ENCODE measurements at regions of chr7 and their contacts with region 1.

Region 1: DNA sequence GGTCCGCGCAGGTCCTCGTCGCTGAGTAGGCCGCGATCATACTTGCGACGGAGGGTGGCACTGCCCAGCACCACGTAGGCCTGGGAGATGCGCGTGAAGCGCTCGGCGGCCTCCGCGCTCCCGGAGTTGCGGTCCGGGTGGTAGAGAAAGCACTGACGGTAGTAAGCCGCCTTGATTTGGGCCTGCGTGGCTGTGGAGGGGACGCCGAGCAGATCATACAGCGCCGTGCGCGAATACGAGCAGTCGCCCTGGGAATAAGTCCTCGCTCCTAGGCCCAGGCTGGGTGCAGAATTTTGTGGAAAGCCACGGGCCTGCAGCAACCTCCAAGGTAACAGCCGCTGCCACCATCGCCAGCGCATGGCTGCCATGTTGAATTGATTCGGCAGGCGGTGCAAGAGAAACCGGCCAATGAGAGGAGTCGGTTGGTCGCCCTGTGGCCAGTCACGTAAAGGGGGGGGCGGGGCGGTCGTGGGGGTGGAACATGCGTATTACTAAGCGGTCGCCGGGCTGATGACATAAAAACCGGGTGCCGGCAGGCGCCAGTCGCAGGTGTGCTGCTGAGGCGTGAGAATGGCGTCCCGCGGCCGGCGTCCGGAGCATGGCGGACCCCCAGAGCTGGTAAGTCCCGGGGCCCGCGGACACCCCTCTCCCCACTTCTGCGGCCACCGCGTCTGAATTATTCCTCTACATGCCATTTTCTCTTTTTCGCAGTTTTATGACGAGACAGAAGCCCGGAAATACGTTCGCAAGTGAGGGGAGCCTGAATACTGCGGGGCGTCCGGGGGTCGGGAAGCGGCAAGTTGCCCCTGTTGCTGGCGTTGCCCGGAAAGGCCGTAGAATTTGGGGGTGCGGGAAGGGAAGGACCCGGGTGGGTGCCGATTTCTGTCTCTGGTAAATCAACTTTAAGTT is at the starts of genes BUD23 and DNAJC30:
- DNase-seq: peak; percentile 97
- H3K4me3 Mint-ChIP-seq: peak within 1 kb of the TSS; percentile 94
- H3K27ac Mint-ChIP-seq: peak within 1 kb of the TSS; percentile 97
- H3K4me1 Mint-ChIP-seq: peaks cover 18% of the 10 kb centered on the region
- H3K27me3 Mint-ChIP-seq: no peaks in the 10 kb centered on the region
- CTCF ChIP-seq: no peak
- total RNA-seq, gene BUD23: 71.5 and 81.9 TPM in 2 replicates
- total RNA-seq, gene DNAJC30: 11.0 and 11.4 TPM in 2 replicates

Region 2: DNA sequence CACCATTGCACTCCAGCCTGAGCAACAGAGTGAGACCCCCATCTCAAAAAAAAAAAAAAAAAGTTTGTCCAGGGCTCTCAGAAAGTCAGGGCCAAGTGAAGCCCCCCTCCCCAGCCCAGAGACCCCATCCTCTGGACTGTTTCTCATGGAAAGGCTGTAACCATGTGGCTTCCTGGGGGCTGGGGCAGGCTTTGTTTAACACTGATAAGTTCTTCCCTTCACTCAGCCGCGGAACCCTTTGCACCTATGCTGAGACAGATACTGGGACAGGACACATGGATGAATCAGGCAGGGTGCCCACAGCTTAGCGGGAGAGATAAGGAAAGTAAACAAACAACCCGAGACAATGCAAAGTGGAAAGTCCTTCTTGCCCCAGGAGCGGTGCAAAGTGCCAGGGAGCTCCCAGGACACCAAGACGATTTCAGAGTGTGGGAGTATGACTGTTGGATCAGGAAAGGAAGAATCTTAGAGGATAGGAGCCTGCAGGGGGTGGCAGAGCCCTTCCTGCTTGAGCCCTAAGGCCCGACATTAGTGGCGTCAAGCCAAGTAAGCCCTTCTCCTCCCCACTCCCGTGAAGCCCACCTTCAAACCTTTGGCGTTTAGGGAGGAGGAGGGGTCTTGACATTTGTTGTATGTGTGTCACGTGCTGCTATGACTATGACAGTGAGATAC is 70.6 kb before region 1 on chr7:
- CTCF ChIA-PET with region 1: no interaction called
- POLR2A ChIA-PET with region 1: no interaction called
- intact Hi-C with region 1: loop called (anchors 1 kb)
- DNase-seq: peak; percentile 51
- H3K4me3 Mint-ChIP-seq: no peak overlapping the region
- H3K27ac Mint-ChIP-seq: no peak overlapping the region
- H3K4me1 Mint-ChIP-seq: peaks cover 16% of the 10 kb centered on the region
- H3K27me3 Mint-ChIP-seq: no peaks in the 10 kb centered on the region
- CTCF ChIP-seq: peak; percentile 25

Region 3: DNA sequence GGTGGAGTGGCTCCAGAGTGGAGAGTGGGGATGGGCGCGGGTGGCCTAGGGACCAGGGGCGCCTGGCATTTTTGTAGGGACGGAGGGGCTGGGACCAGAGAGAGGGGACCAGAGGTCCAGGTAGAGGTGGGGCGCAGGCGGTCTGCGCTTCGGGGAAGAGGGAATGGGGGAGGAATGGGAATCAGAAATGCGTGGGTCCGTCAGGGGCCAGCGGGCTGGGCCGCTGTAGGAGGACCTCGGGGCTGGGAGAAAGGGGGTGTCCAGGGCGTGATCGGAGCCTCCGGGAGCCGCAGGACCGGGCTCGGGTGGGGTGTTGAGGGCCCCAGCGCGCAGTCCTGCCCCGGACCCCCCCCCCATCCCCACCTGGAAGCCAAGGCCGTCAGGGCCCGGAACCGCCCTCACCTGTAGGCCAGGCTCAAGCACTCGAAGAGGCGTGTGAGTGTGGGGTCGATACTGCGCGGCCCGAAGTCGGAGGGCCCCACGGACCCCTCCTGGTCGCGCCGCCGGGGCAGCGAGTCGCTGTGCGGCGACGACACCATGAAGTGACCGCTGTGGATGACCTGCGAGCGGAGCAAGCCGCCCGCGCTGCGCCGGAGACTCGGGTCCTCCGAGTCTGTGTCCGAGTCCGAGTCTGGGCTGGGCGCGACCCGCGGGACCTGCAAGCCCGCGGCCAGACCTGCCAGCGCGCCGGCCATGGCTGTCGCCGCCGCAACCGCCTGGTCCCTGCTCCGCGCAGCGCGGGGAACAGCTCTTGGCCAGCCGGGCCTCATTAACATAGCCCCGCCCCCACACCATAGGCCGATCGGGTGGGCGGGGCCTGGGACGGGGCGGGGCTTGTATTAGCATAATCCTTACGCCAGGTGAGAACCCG is 59.3 kb before region 1 on chr7 and contains the start of gene MLXIPL:
- CTCF ChIA-PET with region 1: interaction called, 3 read pairs
- POLR2A ChIA-PET with region 1: interaction called, 7 read pairs
- intact Hi-C with region 1: loop called (anchors 2 kb)
- DNase-seq: peak; percentile 66
- H3K4me3 Mint-ChIP-seq: peak within 1 kb of the TSS; percentile 57
- H3K27ac Mint-ChIP-seq: no peak within 1 kb of the TSS
- H3K4me1 Mint-ChIP-seq: no peaks in the 10 kb centered on the region
- H3K27me3 Mint-ChIP-seq: peaks cover 5% of the 10 kb centered on the region
- CTCF ChIP-seq: no peak
- total RNA-seq, gene MLXIPL: 1.5 TPM in 1 of 2 replicates, not detected in the other

Region 4: GRCh38 chr7:73718905-73719805 is 35.8 kb after region 1 on chr7 and contains the start of gene STX1A:
- CTCF ChIA-PET with region 1: interaction called, 3 read pairs
- POLR2A ChIA-PET with region 1: interaction called, 3 read pairs
- intact Hi-C with region 1: loop called (anchors 2 kb)
- DNase-seq: peak; percentile 73
- H3K4me3 Mint-ChIP-seq: peak within 1 kb of the TSS; percentile 71
- H3K27ac Mint-ChIP-seq: no peak within 1 kb of the TSS
- H3K4me1 Mint-ChIP-seq: peaks cover 34% of the 10 kb centered on the region
- H3K27me3 Mint-ChIP-seq: no peaks in the 10 kb centered on the region
- CTCF ChIP-seq: no peak
- total RNA-seq, gene STX1A: 21.9 and 24.2 TPM in 2 replicates